ENCODE measurements at regions of chr7 and their contacts with region 1.

Region 1: GRCh38 chr7:149662591-149663095 is 110.7 kb downstream of the ZNF467 start:
- DNase-seq: peak; percentile 86

Region 2: DNA sequence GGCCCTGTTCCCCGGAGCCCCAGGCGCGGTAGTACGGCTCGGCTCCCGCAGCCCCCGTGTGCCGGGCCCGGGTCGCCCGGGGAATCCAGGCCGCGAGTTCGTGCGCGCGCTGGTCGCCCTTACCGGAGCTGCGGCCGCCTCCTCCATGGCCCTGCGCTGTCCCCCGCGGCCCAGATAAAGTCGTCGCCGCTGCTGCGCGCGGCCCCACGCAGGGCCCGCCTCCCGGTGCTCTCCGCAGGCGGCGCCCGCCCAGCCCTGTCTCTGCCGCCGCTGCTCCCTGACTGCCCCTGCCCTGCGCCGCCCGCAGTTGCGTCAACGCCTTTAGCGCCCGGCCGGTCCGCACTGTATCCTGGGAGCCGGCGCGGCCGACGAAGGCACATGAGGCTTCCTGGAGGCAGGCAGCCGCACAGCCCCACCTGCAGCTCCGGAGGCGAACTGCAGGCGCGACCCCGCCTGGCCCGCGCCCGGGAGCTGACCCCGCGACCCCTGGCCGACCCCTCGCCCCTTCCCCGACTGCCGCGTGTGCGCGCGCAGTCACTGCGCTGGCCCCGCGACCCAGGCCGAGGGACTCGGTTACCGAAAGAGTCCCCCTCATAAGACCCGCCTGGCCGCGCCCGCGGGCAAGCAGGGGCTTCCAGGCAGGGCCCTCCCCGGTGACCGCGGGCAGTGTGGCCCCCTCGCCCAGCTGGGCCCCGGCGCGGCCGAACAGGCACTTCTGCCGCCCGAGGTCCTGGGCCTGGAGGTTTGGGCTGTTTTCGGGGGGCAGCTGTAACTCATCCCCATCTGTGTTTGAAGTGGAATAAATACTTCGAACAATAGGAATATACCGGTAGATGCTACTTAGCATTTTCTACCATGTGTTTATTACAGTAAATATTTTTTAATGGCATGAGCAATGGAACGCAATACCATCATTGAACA is 38.0 kb before region 1 on chr7:
- CTCF ChIA-PET with region 1: interaction called, 27 read pairs
- POLR2A ChIA-PET with region 1: interaction called, 5 read pairs
- DNase-seq: peak; percentile 97

Region 3: GRCh38 chr7:149683181-149683580 is 20.5 kb after region 1 on chr7:
- CTCF ChIA-PET with region 1: interaction called, 12 read pairs
- POLR2A ChIA-PET with region 1: no interaction called
- DNase-seq: no peak

Region 4: GRCh38 chr7:149714050-149714909 is 51.6 kb after region 1 on chr7:
- CTCF ChIA-PET with region 1: interaction called, 17 read pairs
- POLR2A ChIA-PET with region 1: interaction called, 7 read pairs
- DNase-seq: peak; percentile 100

Region 5: DNA sequence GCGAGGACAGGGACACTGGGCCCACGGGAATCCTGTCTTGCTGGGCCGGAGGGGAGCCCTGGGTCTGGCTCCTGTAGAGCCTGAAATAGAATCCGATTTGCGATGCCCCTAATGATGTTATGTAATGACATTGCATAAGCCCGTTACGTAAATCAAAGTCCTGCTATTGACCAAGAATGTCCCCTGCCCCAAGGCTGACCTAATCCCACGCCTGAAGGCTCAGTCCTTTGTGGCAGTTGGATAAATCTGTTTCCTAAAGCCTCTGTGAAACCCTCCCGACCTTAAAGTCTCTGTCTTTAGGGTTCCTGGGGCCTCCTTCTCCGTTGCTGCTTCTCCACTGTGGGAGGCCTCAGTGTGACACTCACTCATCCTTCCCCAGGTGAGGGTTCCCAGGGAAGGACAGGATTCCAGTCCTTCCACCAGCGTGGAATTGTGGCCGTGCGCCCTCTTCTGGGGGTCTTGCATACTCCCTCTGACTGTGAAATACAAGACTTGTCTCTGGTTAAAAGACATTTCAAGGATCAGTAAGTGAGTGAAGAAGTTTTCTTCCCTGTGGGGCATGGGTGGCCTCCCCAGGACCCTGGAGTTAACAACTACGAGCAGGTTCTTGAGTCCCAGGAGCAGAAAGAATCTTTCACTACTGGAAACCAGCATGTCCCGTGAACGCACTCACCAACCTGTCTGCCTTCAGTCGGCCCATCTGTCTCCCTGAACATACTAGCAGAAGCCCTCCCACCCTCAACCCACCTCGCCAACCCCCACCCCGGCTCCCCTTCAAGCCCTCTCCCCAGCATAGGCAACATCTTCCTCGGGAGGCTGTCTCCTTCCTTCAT is 91.0 kb after region 1 on chr7:
- CTCF ChIA-PET with region 1: interaction called, 23 read pairs
- POLR2A ChIA-PET with region 1: no interaction called
- DNase-seq: peak; percentile 79

Region 6: DNA sequence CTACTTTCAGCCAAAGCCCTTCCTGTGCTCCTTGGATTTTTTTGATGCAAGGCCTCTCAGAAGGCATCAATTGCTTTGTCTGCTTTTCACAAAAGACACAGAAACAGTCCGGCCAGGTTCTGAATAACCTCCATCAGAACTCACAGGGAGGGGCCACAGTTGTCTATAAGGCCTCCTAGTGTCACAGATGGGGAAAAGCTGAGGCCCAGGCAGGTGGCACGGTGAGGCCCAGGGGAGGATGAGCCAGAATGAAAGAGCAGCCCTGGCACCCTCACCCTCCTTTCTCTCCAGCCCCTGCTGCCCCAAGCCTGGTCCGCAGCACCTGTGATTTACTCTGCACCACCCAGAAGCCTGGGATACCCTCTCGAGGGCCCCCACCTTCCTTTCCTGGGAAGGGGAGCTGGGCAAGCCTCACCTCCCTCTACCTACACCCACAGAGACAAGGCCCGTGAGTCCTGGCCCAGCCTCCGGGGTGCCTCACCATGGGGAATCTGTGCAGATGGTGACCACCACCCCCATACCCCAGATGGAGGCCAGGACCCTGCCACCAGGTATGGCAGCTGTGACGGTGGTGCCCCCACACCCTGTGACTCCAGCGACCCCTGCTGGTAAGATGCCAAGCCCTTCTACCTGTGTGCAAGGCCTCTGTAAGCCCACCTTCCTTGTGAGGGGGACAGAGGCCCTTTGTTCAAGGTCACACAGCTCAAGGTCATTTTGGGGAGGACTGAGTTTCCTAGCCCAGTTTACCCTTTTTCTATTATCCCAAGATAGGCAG is 136.9 kb after region 1 on chr7:
- CTCF ChIA-PET with region 1: interaction called, 30 read pairs
- POLR2A ChIA-PET with region 1: interaction called, 3 read pairs
- DNase-seq: peak; percentile 78

Measured in HEK293T (cell line).